GM23248 (cell line): ENCODE measurements at regions of chr4 and their contacts with region 1.

Region 1: GRCh38 chr4:148998719-148999118 is 556.5 kb upstream of the NR3C2 start:
- DNase-seq: peak; percentile 56
- H3K4me3 ChIP-seq: no peak overlapping the region
- H3K27ac ChIP-seq: no peak overlapping the region
- H3K4me1 ChIP-seq: no peaks in the 10 kb centered on the region
- H3K27me3 ChIP-seq: no peaks in the 10 kb centered on the region

Region 2: DNA sequence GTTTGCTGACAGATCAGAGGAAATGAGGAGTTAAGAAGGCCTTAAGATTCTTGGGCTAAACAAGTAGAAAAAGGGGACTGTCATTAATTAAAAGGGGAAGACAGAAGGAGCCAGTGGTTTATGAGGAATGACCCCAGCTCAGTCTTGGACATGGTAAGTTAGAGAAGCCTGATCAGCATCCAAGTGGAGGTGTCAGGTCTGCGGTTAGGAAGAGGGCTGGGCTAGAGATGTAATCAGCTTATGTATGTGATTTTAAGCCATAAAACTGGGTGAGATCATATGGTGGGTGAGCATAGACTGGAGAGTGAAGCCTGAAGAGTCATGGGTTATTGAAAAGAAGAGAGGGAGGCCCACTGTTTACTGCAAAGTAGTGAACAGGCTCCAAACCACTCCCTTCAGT is 802.6 kb before region 1 on chr4:
- in situ Hi-C with region 1: no loop called
- DNase-seq: no peak
- H3K4me3 ChIP-seq: no peak overlapping the region
- H3K27ac ChIP-seq: no peak overlapping the region
- H3K4me1 ChIP-seq: no peaks in the 10 kb centered on the region
- H3K27me3 ChIP-seq: no peaks in the 10 kb centered on the region

Region 3: GRCh38 chr4:149264093-149264733 is 265.5 kb after region 1 on chr4:
- in situ Hi-C with region 1: loop called (anchors 10 kb)
- DNase-seq: peak; percentile 77
- H3K4me3 ChIP-seq: no peak overlapping the region
- H3K27ac ChIP-seq: no peak overlapping the region
- H3K4me1 ChIP-seq: no peaks in the 10 kb centered on the region
- H3K27me3 ChIP-seq: no peaks in the 10 kb centered on the region